Activated naive CD4-positive, alpha-beta T cell treated with anti-CD3 and anti-CD28 coated beads for 36 hours (primary cell): ENCODE measurements at regions of chr2 and their contacts with region 1.

Region 1: DNA sequence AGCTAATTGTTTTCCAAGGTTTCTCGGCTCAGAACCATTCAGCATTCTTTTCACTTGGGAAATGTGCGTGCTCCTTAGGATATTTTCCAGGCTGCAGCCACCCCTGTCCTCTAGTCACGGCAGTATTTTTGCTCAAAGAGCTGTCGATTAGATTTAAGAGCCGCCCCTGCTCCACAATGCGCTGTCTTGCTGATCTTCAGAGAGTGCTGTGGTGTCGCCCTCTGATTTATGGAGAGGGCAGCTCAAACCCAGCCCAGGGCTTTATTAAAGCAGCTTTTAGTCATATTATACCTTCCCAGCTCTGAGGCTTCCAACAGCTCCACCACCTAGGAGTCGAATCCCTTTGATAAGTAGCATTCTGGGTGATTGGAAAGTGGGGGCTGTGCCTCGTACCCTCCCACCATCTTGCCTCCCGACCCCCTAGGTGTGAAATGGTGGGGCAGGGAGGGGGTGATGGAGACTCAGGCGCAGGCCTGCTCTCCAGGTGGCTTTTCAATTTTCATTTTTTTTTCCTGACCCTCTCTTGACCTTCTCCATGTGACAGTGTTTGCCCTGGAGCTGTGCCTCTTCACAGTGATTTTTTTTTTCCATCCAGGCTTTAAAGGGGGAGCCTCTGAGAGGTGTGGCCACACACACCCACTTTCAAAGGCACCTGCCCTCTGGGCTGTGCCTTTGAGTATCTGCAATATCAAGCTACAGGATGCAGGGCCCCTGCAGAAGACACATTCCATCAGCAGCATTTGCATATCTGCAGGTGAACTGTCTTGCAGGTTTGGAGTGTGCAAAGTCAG is 53.1 kb upstream of the NRP2 start:
- DNase-seq: no peak
- H3K4me3 Mint-ChIP-seq: no peak overlapping the region
- H3K27ac Mint-ChIP-seq: no peak overlapping the region
- H3K4me1 Mint-ChIP-seq: no peaks in the 10 kb centered on the region
- H3K27me3 Mint-ChIP-seq: no peaks in the 10 kb centered on the region

Region 2: GRCh38 chr2:205660521-205661124 is 31.4 kb after region 1 on chr2:
- CTCF ChIA-PET with region 1: no interaction called
- intact Hi-C with region 1: loop called (anchors 5 kb)
- DNase-seq: peak; percentile 75
- H3K4me3 Mint-ChIP-seq: peak overlapping the region; percentile 5
- H3K27ac Mint-ChIP-seq: no peak overlapping the region
- H3K4me1 Mint-ChIP-seq: peaks cover 18% of the 10 kb centered on the region
- H3K27me3 Mint-ChIP-seq: no peaks in the 10 kb centered on the region

Region 3: DNA sequence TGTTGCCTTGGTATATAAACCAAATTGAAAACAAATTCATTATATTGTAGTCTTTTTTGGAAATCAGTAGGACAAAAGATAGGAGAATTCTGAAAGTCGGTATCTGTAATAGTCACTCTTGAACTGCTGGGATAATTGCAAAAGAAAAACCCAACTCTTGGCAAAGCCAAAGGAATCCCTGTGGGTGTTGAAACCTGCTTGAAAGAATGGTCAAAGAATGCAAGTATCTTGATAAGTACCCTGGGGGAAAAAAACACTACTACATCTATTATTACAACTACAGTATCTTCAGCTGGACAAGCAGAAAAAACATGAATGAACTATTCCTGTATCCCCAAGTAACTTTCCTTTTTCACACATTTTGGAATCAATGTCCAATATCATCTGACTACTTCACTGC is 1005.8 kb after region 1 on chr2:
- CTCF ChIA-PET with region 1: no interaction called
- intact Hi-C with region 1: no loop called
- DNase-seq: no peak
- H3K4me3 Mint-ChIP-seq: no peak overlapping the region
- H3K27ac Mint-ChIP-seq: no peak overlapping the region
- H3K4me1 Mint-ChIP-seq: no peaks in the 10 kb centered on the region
- H3K27me3 Mint-ChIP-seq: peaks cover 12% of the 10 kb centered on the region